Heart left ventricle (tissue), 16 donors: ENCODE measurements at regions of chr9 and their contacts with region 1.

Region 1: GRCh38 chr9:134778841-134779411 is 101.7 kb upstream of the FCN2 start:
- DNase-seq: peak; percentile 57 to 77 (median 68)
- ATAC-seq: peak; percentile 39 to 84 (median 74)
- H3K4me3 ChIP-seq: no peak overlapping the region
- H3K27ac ChIP-seq: no peak overlapping the region
- H3K4me1 ChIP-seq: peaks cover 0 to 29% (median 6%) of the 10 kb centered on the region in 12 donors
- H3K27me3 ChIP-seq: no peaks in the 10 kb centered on the region
- CTCF ChIP-seq: peak; percentile 57 to 84 (median 69)
- POLR2A ChIP-seq: no peak

Region 2: DNA sequence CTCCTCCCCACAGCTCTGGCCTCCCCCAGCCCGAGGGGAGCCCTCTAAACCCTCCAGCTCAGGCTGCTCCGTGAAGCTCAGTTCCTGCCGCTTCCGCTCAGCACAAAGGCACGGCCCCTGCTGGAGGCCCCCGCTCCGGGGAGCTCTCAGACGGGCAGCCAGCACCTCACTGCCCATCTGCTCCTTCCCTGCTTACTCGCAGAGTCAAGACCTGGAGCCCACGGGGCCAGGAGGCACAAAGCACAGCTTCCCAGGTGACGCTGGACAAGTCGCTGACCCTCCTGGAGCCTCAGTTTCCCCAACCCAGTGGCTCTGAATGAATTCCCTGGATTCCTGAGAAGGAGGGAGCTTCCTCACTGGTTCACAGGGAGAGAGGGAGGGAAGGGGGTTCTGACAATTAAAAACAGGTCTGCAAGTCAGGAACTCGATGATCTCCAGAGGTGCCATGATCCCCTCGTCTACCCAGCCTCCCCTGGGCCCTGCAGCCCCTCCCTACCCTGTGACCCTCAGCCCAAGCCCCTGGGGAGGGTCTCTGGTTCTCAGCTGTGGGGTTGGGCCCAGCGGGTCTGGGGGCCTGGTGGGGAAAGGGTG is 823.0 kb before region 1 on chr9:
- intact Hi-C with region 1: no loop called
- DNase-seq: peak in 2 of 5 donors; percentile 30 to 63
- ATAC-seq: peak in 2 of 4 donors; percentile 23 to 41
- H3K4me3 ChIP-seq: peak overlapping the region in 8 of 12 donors; percentile 3 to 37 (median 16)
- H3K27ac ChIP-seq: peak overlapping the region in 9 of 12 donors; percentile 19 to 65 (median 38)
- H3K4me1 ChIP-seq: peaks cover 0 to 57% (median 38%) of the 10 kb centered on the region in 12 donors
- H3K27me3 ChIP-seq: no peaks in the 10 kb centered on the region
- CTCF ChIP-seq: no peak
- POLR2A ChIP-seq: no peak

Region 3: GRCh38 chr9:134602547-134603309 is 176.2 kb before region 1 on chr9:
- intact Hi-C with region 1: no loop called
- DNase-seq: peak; percentile 41 to 82 (median 56)
- ATAC-seq: peak in 3 of 4 donors; percentile 44 to 89 (median 69)
- H3K4me3 ChIP-seq: no peak overlapping the region
- H3K27ac ChIP-seq: peak overlapping the region in 5 of 12 donors; percentile 9 to 74 (median 25)
- H3K4me1 ChIP-seq: peaks cover 0 to 18% (median 4%) of the 10 kb centered on the region in 12 donors
- H3K27me3 ChIP-seq: peaks cover 0 to 34% (median 6%) of the 10 kb centered on the region in 9 donors
- CTCF ChIP-seq: no peak
- POLR2A ChIP-seq: no peak

Region 4: DNA sequence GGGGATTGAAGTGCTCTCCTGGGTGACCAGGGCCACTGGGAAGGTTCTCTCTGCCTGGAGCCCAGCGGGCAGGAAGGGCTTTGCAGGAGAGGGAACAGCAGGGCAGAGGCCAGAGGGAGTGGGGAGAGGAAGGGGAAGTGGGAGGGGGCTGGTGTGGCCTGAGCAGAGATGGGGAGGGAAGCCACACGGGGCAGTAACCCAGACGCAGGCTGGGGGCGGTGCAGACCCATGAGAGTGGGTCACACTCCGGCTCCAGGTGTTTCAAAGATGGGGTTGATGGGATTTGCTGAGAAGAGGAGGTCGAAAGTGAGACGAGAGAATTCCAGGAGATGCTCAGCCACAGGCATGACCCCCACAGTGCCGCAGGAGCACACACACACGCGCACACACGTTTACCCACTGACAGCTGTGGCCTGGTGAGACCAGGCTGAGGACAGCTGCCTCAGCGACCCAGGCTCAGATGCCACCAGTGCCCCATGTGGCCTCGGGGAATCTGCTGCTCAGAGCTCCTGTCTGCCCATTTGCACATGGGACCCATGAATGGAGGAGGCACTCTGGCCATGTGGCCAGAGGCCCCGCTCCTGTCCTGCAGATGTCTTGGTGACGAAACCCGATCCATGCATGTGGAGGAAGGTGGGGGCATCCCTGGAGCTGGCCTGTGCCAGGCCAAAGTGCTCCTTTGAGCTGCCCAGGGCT is 69.0 kb after region 1 on chr9:
- intact Hi-C with region 1: no loop called
- DNase-seq: no peak
- ATAC-seq: peak; percentile 36 to 58 (median 54)
- H3K4me3 ChIP-seq: no peak overlapping the region
- H3K27ac ChIP-seq: no peak overlapping the region
- H3K4me1 ChIP-seq: no peaks in the 10 kb centered on the region
- H3K27me3 ChIP-seq: no peaks in the 10 kb centered on the region
- CTCF ChIP-seq: no peak
- POLR2A ChIP-seq: no peak

Region 5: DNA sequence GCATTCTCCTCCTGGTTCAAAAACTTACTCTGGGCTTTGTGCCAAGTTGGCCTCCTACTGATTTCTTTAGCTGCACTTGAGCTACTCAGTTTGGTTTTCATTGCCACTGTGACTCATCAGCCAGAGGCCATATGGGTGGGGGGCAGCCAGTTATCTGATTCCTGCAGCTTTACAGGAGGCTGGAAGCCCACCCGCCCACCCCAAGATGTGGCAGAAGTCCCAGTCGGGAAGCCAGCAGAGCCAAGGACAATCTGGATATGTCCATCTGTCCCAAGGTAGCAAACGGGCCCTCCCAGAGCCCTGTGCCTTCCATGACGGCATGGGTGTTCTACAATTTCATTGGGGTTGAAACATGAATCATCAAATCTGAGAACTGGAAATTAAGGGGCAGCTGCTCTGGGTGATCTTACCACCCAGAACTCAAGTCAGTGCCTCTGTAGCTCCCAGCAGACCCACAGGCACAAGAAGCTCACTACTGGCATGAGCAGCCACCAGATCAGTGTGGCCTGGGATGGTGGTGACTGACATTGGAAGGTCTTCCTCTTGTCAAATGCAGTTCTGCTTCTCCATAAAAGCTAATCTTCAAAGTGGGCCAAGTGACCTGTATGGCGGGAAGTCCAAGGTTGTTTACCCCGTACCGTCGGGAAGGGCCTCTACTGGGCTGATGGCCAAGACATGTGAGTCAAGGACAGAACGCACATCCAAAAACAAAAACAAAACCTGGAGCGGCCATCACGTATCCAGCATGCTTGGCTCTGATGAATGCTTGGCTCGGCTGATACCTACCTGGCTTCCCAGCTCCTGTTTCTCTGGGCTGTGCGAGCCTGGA is 117.3 kb after region 1 on chr9:
- intact Hi-C with region 1: loop called in 3 of 10 experiments (anchors 5 to 10 kb)
- DNase-seq: peak in 4 of 5 donors; percentile 62 to 83 (median 78)
- ATAC-seq: peak; percentile 71 to 90 (median 80)
- H3K4me3 ChIP-seq: no peak overlapping the region
- H3K27ac ChIP-seq: peak overlapping the region; percentile 53 to 88 (median 76)
- H3K4me1 ChIP-seq: peaks cover 2 to 50% (median 31%) of the 10 kb centered on the region in 12 donors
- H3K27me3 ChIP-seq: no peaks in the 10 kb centered on the region
- CTCF ChIP-seq: no peak
- POLR2A ChIP-seq: no peak

Region 6: GRCh38 chr9:134983074-134983473 is 204.1 kb after region 1 on chr9:
- intact Hi-C with region 1: loop called in 9 of 10 experiments (anchors 1 to 10 kb)
- DNase-seq: peak in 3 of 5 donors; percentile 37 to 78 (median 53)
- ATAC-seq: peak; percentile 31 to 49 (median 40)
- H3K4me3 ChIP-seq: no peak overlapping the region
- H3K27ac ChIP-seq: no peak overlapping the region
- H3K4me1 ChIP-seq: no peaks in the 10 kb centered on the region
- H3K27me3 ChIP-seq: peaks cover 0 to 5% (median 0%) of the 10 kb centered on the region in 9 donors
- CTCF ChIP-seq: peak; percentile 33 to 63 (median 52)
- POLR2A ChIP-seq: no peak

Region 7: DNA sequence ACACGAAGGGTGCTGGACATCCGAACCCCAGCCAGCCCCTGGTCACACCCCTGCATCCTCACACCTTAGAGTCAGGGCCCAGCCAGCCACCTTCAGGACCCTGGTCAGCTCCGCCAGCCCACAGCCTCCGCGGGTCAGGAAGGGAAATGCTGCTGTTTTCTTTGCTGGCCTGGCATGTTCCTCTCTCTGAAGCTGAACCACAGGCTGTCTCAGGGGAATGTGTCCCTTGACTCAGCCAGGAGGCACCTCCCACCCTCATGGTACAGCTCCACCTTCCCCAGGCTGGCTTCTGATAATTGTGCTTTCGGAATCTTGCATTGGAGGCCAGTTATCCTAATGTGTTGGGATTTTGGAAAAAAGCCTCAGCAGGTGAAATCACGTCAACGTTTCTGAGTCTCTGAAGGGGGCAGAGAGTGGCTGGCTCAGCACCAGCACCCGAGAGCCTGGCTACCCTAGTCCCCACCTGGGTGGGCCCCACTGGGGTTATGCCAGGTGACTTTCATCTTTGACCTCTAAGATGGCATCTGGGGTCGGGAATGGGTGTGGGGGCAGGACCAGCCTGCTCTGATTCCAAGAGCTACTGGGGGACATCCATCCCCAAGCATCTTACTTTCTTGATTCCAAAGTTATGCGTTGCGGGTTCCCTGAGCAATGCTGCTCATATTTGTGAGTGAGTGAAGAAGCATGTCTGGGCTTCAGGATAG is 298.7 kb after region 1 on chr9:
- intact Hi-C with region 1: loop called in 7 of 10 experiments (anchors 5 to 10 kb)
- DNase-seq: peak in 2 of 5 donors; percentile 11 to 61
- ATAC-seq: no peak
- H3K4me3 ChIP-seq: no peak overlapping the region
- H3K27ac ChIP-seq: no peak overlapping the region
- H3K4me1 ChIP-seq: peaks cover 0 to 18% (median 5%) of the 10 kb centered on the region in 12 donors
- H3K27me3 ChIP-seq: peaks cover 0 to 19% (median 0%) of the 10 kb centered on the region in 9 donors
- CTCF ChIP-seq: no peak
- POLR2A ChIP-seq: no peak